Activated CD4-positive, alpha-beta memory T cell treated with anti-CD3 and anti-CD28 coated beads for 36 hours (primary cell): ENCODE measurements at regions of chr2 and their contacts with region 1.

Region 1: GRCh38 chr2:30711646-30712085 is 95.6 kb downstream of the CAPN13 start:
- DNase-seq: peak; percentile 89
- H3K4me3 Mint-ChIP-seq: no peak overlapping the region
- H3K27ac Mint-ChIP-seq: no peak overlapping the region
- H3K4me1 Mint-ChIP-seq: peaks cover 10% of the 10 kb centered on the region
- H3K27me3 Mint-ChIP-seq: peaks cover 3% of the 10 kb centered on the region

Region 2: DNA sequence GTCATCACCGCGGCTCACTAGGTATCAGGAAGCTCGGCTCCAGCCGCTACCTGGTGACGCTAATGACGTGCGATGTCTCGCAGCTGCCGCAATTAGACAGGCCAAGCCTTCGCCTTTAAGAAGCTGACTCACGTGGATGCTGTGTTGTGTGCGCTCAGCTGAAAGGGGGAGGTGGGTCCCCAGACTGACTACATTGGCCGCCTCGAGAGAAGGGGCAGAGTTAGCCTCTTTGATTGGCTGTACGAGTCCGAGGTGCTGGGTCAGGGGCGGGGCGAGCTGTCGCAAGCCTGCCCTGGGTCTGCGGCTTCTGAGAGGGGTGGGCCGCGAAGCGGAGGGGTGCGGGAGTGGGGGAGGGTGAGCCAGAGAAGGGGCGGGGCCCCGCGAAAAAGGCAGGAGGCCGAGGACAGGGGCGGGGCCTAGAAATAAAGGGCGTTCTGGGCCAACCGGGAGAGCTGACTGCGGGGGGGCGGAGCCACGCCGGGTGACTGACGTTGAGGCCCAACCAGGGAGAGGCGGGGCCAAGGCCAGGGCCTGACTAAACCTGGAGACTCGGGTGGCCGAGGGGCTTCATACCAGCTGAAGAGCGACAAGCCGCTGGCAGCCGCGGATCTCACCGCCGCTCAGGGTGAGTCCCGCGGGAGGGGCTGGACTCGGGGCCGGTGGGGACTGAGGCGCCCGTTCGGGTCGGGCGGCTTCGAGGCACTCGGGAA is 565.1 kb before region 1 on chr2 and contains the start of gene YPEL5:
- CTCF ChIA-PET with region 1: interaction called, 47 read pairs
- POLR2A ChIA-PET with region 1: no interaction called
- intact Hi-C with region 1: loop called (anchors 5 kb)
- DNase-seq: peak; percentile 99
- H3K4me3 Mint-ChIP-seq: peak within 1 kb of the TSS; percentile 82
- H3K27ac Mint-ChIP-seq: peak within 1 kb of the TSS; percentile 95
- H3K4me1 Mint-ChIP-seq: peaks cover 51% of the 10 kb centered on the region
- H3K27me3 Mint-ChIP-seq: no peaks in the 10 kb centered on the region
- total RNA-seq, gene YPEL5: 43.3 to 43.4 TPM

Region 3: DNA sequence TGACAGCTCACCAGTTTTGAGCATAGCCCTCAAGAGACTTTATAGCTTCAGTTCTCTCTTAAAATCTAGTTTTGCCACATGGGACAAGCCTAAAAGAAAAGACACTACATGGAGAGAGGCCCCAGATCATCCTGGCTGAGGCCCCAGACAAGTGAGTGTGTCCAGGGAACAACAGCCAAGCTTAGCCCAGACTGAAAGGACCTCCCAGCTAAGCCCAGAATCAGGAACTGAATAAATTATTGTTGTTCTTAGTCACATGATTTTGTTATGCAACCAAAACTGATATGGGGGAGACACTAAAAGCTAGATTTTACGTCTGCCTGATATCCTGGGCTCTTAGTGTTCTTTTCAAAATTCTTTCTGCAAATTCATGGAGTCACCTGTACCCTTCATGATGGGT is 509.7 kb before region 1 on chr2:
- CTCF ChIA-PET with region 1: interaction called, 252 read pairs
- POLR2A ChIA-PET with region 1: no interaction called
- intact Hi-C with region 1: no loop called
- DNase-seq: no peak
- H3K4me3 Mint-ChIP-seq: no peak overlapping the region
- H3K27ac Mint-ChIP-seq: no peak overlapping the region
- H3K4me1 Mint-ChIP-seq: no peaks in the 10 kb centered on the region
- H3K27me3 Mint-ChIP-seq: no peaks in the 10 kb centered on the region

Region 4: GRCh38 chr2:30231212-30231995 is 480.3 kb before region 1 on chr2 and contains the start of gene LBH:
- CTCF ChIA-PET with region 1: interaction called, 30 read pairs
- POLR2A ChIA-PET with region 1: no interaction called
- intact Hi-C with region 1: no loop called
- DNase-seq: peak; percentile 94
- H3K4me3 Mint-ChIP-seq: peak within 1 kb of the TSS; percentile 84
- H3K27ac Mint-ChIP-seq: peak within 1 kb of the TSS; percentile 94
- H3K4me1 Mint-ChIP-seq: peaks cover 63% of the 10 kb centered on the region
- H3K27me3 Mint-ChIP-seq: no peaks in the 10 kb centered on the region
- total RNA-seq, gene LBH: 109 to 112 TPM

Region 5: GRCh38 chr2:30686000-30686399 is 25.7 kb before region 1 on chr2:
- CTCF ChIA-PET with region 1: interaction called, 26 read pairs
- POLR2A ChIA-PET with region 1: no interaction called
- intact Hi-C with region 1: no loop called
- DNase-seq: peak; percentile 24
- H3K4me3 Mint-ChIP-seq: no peak overlapping the region
- H3K27ac Mint-ChIP-seq: no peak overlapping the region
- H3K4me1 Mint-ChIP-seq: no peaks in the 10 kb centered on the region
- H3K27me3 Mint-ChIP-seq: no peaks in the 10 kb centered on the region

Region 6: GRCh38 chr2:30862054-30862651 is 150.5 kb after region 1 on chr2:
- CTCF ChIA-PET with region 1: interaction called, 83 read pairs
- POLR2A ChIA-PET with region 1: no interaction called
- intact Hi-C with region 1: loop called (anchors 2 kb)
- DNase-seq: peak; percentile 45
- H3K4me3 Mint-ChIP-seq: no peak overlapping the region
- H3K27ac Mint-ChIP-seq: no peak overlapping the region
- H3K4me1 Mint-ChIP-seq: peaks cover 8% of the 10 kb centered on the region
- H3K27me3 Mint-ChIP-seq: peaks cover 3% of the 10 kb centered on the region

Region 7: GRCh38 chr2:31523871-31524492 is 812.3 kb after region 1 on chr2:
- CTCF ChIA-PET with region 1: interaction called, 13 read pairs
- POLR2A ChIA-PET with region 1: no interaction called
- intact Hi-C with region 1: loop called (anchors 5 kb)
- DNase-seq: peak; percentile 55
- H3K4me3 Mint-ChIP-seq: no peak overlapping the region
- H3K27ac Mint-ChIP-seq: no peak overlapping the region
- H3K4me1 Mint-ChIP-seq: no peaks in the 10 kb centered on the region
- H3K27me3 Mint-ChIP-seq: peaks cover 11% of the 10 kb centered on the region